B cell (primary cell): ENCODE measurements at regions of chr13 and their contacts with region 1.

Region 1: DNA sequence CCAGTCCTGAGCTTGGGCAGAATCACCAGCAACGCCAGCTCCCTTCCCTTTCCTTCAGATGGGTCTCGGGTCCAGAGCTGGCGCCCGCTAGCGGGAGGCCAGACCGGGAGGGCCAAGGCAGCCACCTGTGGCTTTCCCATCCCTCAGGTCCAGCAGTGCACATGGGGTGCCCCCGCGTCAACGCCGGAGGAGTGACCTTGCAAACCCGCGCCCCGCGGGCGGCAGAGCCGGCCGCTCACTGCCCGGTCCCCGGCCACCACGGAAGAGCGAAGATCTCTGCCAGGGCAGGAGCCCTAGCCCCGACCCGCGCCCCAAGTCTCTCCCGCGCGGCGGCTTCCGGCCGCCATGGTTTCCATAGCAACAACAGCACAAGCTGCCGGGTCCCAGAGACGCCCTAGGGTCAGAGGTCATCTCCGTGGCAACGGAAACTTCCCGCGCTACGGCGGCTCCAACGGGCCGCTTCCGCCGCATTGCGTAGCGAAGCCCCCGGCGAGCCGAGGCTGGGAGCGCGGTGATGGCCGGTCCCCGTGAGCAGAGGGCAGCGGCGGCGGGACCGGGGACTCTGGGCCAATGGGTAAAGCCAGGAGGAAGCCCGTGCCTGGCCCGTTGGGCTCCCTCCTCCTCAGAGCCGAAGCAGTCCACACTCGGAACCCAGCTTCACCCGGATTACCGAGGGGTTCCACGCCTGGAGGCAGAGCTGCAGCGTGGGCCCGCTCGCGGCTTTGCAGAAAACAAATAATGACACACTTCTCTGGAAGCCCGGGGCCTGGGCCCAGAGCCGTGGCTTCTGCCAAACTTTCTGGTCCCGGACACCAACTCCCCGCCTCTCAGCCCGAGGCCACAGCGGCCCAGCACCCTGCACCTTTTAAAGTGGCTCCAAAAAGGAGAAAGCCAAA is 7.4 kb downstream of the FGF14 start:
- DNase-seq: peak; percentile 95
- ATAC-seq: peak; percentile 90
- H3K4me3 ChIP-seq: peak overlapping the region; percentile 41 to 93 (median 73)
- H3K4me3 Mint-ChIP-seq: peak overlapping the region; percentile 91
- H3K27ac ChIP-seq: peak overlapping the region in 1 of 2 donors; percentile 29
- H3K27ac Mint-ChIP-seq: peak overlapping the region; percentile 71
- H3K4me1 ChIP-seq: peaks cover 4 to 13% of the 10 kb centered on the region in 2 donors
- H3K4me1 Mint-ChIP-seq: peaks cover 6% of the 10 kb centered on the region
- H3K27me3 ChIP-seq: peaks cover 0 to 22% (median 4%) of the 10 kb centered on the region in 4 experiments
- H3K27me3 Mint-ChIP-seq: peaks cover 19% of the 10 kb centered on the region
- CTCF ChIP-seq: no peak

Region 2: DNA sequence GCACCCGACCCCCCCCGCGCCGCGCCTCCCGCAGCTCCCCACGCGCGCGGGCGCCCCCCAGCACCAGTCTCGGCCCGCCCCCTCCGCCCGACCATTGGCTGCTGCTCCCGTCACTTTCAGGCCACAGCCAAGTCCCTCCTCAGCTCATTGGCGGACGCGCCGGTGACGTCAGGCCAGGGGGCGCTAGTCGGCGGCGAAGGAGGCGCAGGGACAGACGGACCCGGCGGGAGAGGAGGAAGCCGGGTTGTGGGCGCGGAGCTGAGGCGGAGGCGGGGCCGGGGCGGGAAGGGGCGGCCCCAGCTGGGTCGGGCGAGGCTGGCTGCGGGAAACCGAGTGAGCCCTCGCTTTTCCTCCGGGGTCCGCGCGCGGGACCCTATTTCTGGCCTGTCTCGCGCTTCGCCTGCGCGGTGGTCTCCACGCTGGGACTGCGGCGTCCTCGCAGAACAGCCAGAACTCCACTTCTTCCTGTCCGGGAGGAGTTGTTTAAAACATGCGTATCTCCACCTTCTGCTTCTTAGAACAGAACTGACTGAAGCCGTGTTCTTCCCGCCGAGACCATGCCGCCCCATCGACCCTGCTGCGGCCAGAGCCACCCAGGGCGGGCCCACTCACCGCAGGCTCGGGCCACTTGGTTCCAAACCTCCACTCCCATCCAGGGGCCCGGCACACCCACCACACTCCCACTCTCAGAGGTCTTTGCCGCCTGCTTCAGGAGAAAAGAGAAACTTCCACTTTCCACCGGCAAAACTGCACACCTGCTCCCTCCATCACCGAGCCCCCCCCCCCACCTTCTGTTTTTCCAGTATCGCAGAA is 1719.4 kb before region 1 on chr13:
- CTCF ChIA-PET with region 1: no interaction called
- POLR2A ChIA-PET with region 1: no interaction called
- intact Hi-C with region 1: loop called (anchors 5 kb)
- DNase-seq: peak; percentile 98
- ATAC-seq: peak; percentile 93
- H3K4me3 ChIP-seq: peak overlapping the region; percentile 55 to 84 (median 76)
- H3K4me3 Mint-ChIP-seq: peak overlapping the region; percentile 91
- H3K27ac ChIP-seq: peak overlapping the region in 1 of 2 donors; percentile 48
- H3K27ac Mint-ChIP-seq: peak overlapping the region; percentile 89
- H3K4me1 ChIP-seq: peaks cover 13 to 19% of the 10 kb centered on the region in 2 donors
- H3K4me1 Mint-ChIP-seq: peaks cover 13% of the 10 kb centered on the region
- H3K27me3 ChIP-seq: no peaks in the 10 kb centered on the region
- H3K27me3 Mint-ChIP-seq: peaks cover 9% of the 10 kb centered on the region
- CTCF ChIP-seq: peak; percentile 25

Region 3: DNA sequence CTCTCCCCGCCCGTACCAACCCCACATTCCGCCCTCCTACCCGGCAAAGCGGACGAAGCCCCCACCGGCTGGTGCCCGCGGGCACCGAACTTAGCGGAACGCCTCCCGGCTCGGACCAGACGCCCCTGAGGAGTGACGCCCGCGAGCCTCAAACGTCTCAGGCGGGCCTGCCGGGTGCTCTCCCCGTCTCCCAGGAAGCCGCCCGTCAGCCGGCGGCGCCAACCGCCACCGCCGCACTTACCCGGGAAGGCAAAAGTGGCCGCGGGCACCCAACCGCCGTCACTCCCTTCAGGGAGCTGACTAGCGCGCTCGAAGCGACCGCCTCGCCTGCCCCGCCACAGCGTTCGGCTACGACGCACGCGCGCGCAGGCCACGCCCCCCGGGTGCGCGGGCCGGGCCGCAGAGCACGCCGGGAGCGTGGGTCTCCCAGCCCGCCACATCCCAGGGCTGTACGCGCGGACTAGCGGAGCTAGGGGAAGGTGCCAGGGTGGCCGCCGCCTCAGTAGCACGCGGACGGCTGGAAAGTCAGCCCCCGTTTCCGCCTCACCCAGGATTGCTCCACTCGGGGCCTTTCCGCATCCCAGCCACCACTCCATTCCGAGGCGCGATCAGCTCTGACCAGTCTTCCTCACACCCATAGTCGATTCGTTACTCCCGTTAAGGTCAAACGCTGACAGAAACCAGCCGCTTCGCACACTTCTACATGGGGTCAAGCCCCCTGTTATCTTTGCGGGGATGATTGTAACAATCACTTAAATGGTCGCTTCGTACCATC is 379.2 kb after region 1 on chr13 and contains the start of gene TEX30:
- CTCF ChIA-PET with region 1: no interaction called
- POLR2A ChIA-PET with region 1: interaction called, 5 read pairs
- intact Hi-C with region 1: loop called (anchors 10 kb)
- DNase-seq: peak; percentile 92
- ATAC-seq: peak; percentile 95
- H3K4me3 ChIP-seq: peak within 1 kb of the TSS; percentile 61 to 96 (median 87)
- H3K4me3 Mint-ChIP-seq: peak within 1 kb of the TSS; percentile 93
- H3K27ac ChIP-seq: peak within 1 kb of the TSS; percentile 71 to 85
- H3K27ac Mint-ChIP-seq: peak within 1 kb of the TSS; percentile 95
- H3K4me1 ChIP-seq: peaks cover 7 to 16% of the 10 kb centered on the region in 2 donors
- H3K4me1 Mint-ChIP-seq: peaks cover 13% of the 10 kb centered on the region
- H3K27me3 ChIP-seq: no peaks in the 10 kb centered on the region
- H3K27me3 Mint-ChIP-seq: no peaks in the 10 kb centered on the region
- CTCF ChIP-seq: no peak
- total RNA-seq, gene TEX30: 5.3 and 5.9 TPM in 2 replicates